ENCODE measurements at regions of chr16 and their contacts with region 1.

Region 1: GRCh38 chr16:71564155-71564967 is 12.5 kb downstream of the TAT start:
- DNase-seq: no peak
- H3K4me3 ChIP-seq: peak overlapping the region; percentile 44
- H3K4me3 Mint-ChIP-seq: peak overlapping the region; percentile 94
- H3K27ac Mint-ChIP-seq: peak overlapping the region; percentile 97
- H3K4me1 ChIP-seq: peaks cover 8% of the 10 kb centered on the region; the same call in 1 of the 2 replicates
- H3K4me1 Mint-ChIP-seq: peaks cover 20% of the 10 kb centered on the region
- H3K27me3 ChIP-seq: no peaks in the 10 kb centered on the region
- H3K27me3 Mint-ChIP-seq: no peaks in the 10 kb centered on the region
- CTCF ChIP-seq: no peak

Region 2: GRCh38 chr16:71319999-71320398 is 244.4 kb before region 1 on chr16:
- CTCF ChIA-PET with region 1: no interaction called
- POLR2A ChIA-PET with region 1: no interaction called
- intact Hi-C with region 1: no loop called
- DNase-seq: no peak
- H3K4me3 ChIP-seq: no peak overlapping the region
- H3K4me3 Mint-ChIP-seq: no peak overlapping the region
- H3K27ac Mint-ChIP-seq: no peak overlapping the region
- H3K4me1 ChIP-seq: no peaks in the 10 kb centered on the region
- H3K4me1 Mint-ChIP-seq: no peaks in the 10 kb centered on the region
- H3K27me3 ChIP-seq: no peaks in the 10 kb centered on the region; the same call in 1 of the 2 replicates
- H3K27me3 Mint-ChIP-seq: peaks cover 7% of the 10 kb centered on the region
- CTCF ChIP-seq: no peak

Region 3: DNA sequence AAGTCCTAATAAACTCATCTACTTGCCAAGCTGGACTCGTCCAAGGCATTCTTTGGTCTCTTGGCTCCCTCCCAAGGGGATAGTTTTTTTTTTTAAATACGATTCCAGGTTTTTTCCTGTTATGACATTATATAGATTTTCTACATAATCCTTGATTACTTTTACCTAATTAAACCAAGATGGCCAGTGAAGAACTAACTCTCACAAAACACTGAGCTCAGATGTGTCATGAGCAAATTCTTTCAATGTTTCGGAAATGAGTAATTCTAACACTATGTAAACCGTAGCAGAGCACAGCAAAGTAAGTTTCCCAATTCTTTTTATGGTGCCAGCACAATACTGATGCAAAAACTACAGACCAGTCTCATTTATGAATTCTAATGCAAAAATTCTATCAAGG is 104.1 kb before region 1 on chr16:
- CTCF ChIA-PET with region 1: no interaction called
- POLR2A ChIA-PET with region 1: no interaction called
- intact Hi-C with region 1: no loop called
- DNase-seq: no peak
- H3K4me3 ChIP-seq: no peak overlapping the region
- H3K4me3 Mint-ChIP-seq: no peak overlapping the region
- H3K27ac Mint-ChIP-seq: no peak overlapping the region
- H3K4me1 ChIP-seq: peaks cover 7% of the 10 kb centered on the region; the same call in 1 of the 2 replicates
- H3K4me1 Mint-ChIP-seq: no peaks in the 10 kb centered on the region
- H3K27me3 ChIP-seq: no peaks in the 10 kb centered on the region
- H3K27me3 Mint-ChIP-seq: no peaks in the 10 kb centered on the region
- CTCF ChIP-seq: no peak

Region 4: GRCh38 chr16:71576971-71577370 is 12.6 kb after region 1 on chr16 and contains the start of gene TAT:
- CTCF ChIA-PET with region 1: interaction called, 11 read pairs
- POLR2A ChIA-PET with region 1: no interaction called
- intact Hi-C with region 1: no loop called
- DNase-seq: no peak
- H3K4me3 ChIP-seq: no peak within 1 kb of the TSS
- H3K4me3 Mint-ChIP-seq: no peak within 1 kb of the TSS
- H3K27ac Mint-ChIP-seq: no peak within 1 kb of the TSS
- H3K4me1 ChIP-seq: peaks cover 8% of the 10 kb centered on the region
- H3K4me1 Mint-ChIP-seq: no peaks in the 10 kb centered on the region
- H3K27me3 ChIP-seq: no peaks in the 10 kb centered on the region
- H3K27me3 Mint-ChIP-seq: peaks cover 3% of the 10 kb centered on the region
- CTCF ChIP-seq: no peak
- total RNA-seq, gene TAT: not detected in 2 replicates

Region 5: GRCh38 chr16:71626018-71626857 is 61.9 kb after region 1 on chr16 and contains the start of gene MARVELD3:
- CTCF ChIA-PET with region 1: interaction called, 5 read pairs
- POLR2A ChIA-PET with region 1: interaction called, 12 read pairs
- intact Hi-C with region 1: no loop called
- DNase-seq: peak; percentile 96 to 99
- H3K4me3 ChIP-seq: peak within 1 kb of the TSS; percentile 85
- H3K4me3 Mint-ChIP-seq: no peak within 1 kb of the TSS
- H3K27ac Mint-ChIP-seq: peak within 1 kb of the TSS; percentile 75
- H3K4me1 ChIP-seq: peaks cover 12% of the 10 kb centered on the region
- H3K4me1 Mint-ChIP-seq: peaks cover 9% of the 10 kb centered on the region
- H3K27me3 ChIP-seq: no peaks in the 10 kb centered on the region
- H3K27me3 Mint-ChIP-seq: no peaks in the 10 kb centered on the region
- CTCF ChIP-seq: peak; percentile 41 to 75
- total RNA-seq, gene MARVELD3: 50.6 and 51.7 TPM in 2 replicates

Region 6: GRCh38 chr16:71927383-71927782 is 363.0 kb after region 1 on chr16:
- CTCF ChIA-PET with region 1: no interaction called
- POLR2A ChIA-PET with region 1: no interaction called
- intact Hi-C with region 1: no loop called
- DNase-seq: no peak
- H3K4me3 ChIP-seq: no peak overlapping the region
- H3K4me3 Mint-ChIP-seq: no peak overlapping the region
- H3K27ac Mint-ChIP-seq: peak overlapping the region; percentile 3
- H3K4me1 ChIP-seq: peaks cover 19% of the 10 kb centered on the region
- H3K4me1 Mint-ChIP-seq: peaks cover 30% of the 10 kb centered on the region
- H3K27me3 ChIP-seq: no peaks in the 10 kb centered on the region
- H3K27me3 Mint-ChIP-seq: no peaks in the 10 kb centered on the region
- CTCF ChIP-seq: no peak